Aorta (tissue), 5 donors: ENCODE measurements at regions of chr12 and their contacts with region 1.

Region 1: DNA sequence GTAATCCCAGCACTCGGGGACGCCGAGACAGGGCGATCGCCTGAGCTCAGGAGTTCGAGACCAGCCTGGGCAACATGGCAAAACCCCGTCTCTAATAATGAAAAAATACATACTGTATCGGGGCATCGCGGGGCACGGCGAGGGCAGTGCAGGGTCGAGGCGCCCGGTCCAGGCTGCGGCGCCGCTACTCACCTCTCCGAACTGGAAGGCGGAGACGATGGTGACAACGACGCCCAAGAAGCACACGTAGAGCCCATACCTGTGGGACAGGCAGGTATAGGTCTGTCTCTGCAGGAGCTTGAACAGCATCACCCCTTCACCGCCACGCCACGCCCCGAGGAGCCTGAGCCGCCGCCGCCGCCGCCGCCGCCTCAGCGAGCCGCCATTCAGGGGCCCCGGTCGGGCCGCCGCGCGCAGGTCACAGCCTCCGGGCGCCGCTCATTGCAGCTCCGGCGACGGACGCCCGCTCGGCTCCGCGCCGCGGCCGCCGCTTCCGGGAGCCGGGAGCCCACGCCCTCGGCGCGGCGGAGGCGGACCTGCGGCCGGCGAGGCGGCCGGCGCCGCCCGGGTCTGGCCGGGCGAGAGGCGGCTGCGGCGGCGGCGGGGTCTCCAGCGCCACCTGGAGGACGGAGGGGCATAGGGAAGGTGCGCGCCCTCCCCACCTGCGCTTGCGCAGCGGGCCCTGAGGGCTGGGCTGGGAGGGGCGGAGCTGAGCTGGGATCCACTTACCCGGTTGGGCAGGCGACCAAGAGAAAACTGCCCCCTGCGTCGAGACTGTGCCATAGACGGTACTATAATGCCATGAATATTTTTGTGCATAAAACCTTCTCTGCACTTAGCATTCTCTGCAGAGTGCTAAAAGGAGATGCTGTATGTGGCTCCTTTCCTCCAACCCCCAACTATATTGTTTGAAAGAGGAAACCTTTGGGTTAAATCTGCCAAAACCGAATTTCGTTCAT is at the start of gene GNPTAB:
- DNase-seq: peak; percentile 96 to 98
- ATAC-seq: peak; percentile 98
- H3K4me3 ChIP-seq: peak within 1 kb of the TSS; percentile 67 to 100
- H3K27ac ChIP-seq: peak within 1 kb of the TSS in 1 of 2 donors; percentile 85
- H3K4me1 ChIP-seq: peaks cover 0 to 1% of the 10 kb centered on the region in 2 donors
- H3K27me3 ChIP-seq: no peaks in the 10 kb centered on the region
- total RNA-seq, gene GNPTAB: 29.1 to 43.3 TPM

Region 2: GRCh38 chr12:101792051-101792931 is 38.4 kb before region 1 on chr12:
- intact Hi-C with region 1: loop called in 1 of 2 experiments (anchors 5 kb)
- DNase-seq: no peak
- ATAC-seq: no peak
- H3K4me3 ChIP-seq: no peak overlapping the region
- H3K27ac ChIP-seq: no peak overlapping the region
- H3K4me1 ChIP-seq: no peaks in the 10 kb centered on the region
- H3K27me3 ChIP-seq: no peaks in the 10 kb centered on the region

Region 3: GRCh38 chr12:101891462-101892273 is 61.0 kb after region 1 on chr12:
- intact Hi-C with region 1: loop called in 1 of 2 experiments (anchors 1 kb)
- DNase-seq: peak in 1 of 2 donors; percentile 73
- ATAC-seq: peak; percentile 62
- H3K4me3 ChIP-seq: no peak overlapping the region
- H3K27ac ChIP-seq: peak overlapping the region; percentile 22 to 39
- H3K4me1 ChIP-seq: peaks cover 0 to 3% of the 10 kb centered on the region in 2 donors
- H3K27me3 ChIP-seq: no peaks in the 10 kb centered on the region

Region 4: DNA sequence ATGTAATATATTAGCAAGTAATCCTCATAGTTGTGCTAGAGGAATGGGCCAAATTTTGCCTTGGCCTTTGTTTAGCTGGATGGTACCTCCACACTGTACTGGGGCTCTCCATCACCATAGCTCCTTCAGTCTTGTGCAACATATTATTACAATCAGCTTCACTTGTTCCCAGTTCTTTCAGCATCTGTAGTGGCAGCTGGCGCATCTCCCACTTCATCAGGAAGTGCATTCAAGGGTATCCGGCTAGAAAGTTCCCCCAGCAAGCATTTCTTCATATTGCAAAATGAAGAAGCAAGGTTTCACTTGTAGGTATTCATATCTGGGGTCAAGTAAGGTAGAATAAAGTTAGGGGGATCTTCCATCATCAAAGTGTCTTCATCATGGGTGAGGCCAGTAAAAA is 526.0 kb after region 1 on chr12:
- intact Hi-C with region 1: no loop called
- DNase-seq: no peak
- ATAC-seq: no peak
- H3K4me3 ChIP-seq: no peak overlapping the region
- H3K27ac ChIP-seq: no peak overlapping the region
- H3K4me1 ChIP-seq: no peaks in the 10 kb centered on the region
- H3K27me3 ChIP-seq: peaks cover 0 to 1% of the 10 kb centered on the region in 2 donors